PC-9 (cell line): ENCODE measurements at regions of chr17 and their contacts with region 1.

Region 1: GRCh38 chr17:9090641-9091096 is 69.4 kb downstream of the NTN1 start:
- DNase-seq: no peak
- H3K4me3 ChIP-seq: no peak overlapping the region
- H3K27ac ChIP-seq: no peak overlapping the region
- H3K4me1 ChIP-seq: no peaks in the 10 kb centered on the region
- H3K27me3 ChIP-seq: no peaks in the 10 kb centered on the region
- CTCF ChIP-seq: no peak

Region 2: DNA sequence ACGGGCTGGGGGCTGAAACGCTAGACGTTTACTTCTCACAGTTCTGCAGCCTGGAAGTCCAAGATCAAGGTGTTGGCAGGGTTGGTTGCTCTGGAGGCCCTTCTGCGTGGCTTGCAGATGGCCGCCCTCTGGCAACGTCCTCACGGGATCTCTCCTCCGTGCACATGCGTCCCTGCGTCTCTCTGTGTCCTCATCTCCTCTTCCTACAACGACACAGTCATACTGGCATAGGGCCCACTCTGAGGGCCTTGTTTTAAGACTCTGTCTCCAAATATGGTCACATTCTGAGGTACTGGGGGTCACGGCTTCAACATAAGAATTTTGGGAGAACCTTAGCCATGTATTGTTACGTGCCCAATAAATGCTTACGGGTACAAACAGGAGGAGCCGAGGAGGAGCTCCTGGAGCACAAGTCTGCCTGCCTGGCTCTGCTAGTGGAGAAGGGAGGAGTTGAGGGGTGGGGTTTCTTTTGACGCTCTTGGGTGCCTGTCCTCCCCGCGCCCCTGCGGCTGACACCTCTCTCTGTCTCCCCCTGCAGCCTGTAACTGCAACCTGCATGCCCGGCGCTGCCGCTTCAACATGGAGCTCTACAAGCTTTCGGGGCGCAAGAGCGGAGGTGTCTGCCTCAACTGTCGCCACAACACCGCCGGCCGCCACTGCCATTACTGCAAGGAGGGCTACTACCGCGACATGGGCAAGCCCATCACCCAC is 71.8 kb after region 1 on chr17:
- CTCF ChIA-PET with region 1: no interaction called
- POLR2A ChIA-PET with region 1: no interaction called
- intact Hi-C with region 1: no loop called
- DNase-seq: no peak
- H3K4me3 ChIP-seq: no peak overlapping the region
- H3K27ac ChIP-seq: no peak overlapping the region
- H3K4me1 ChIP-seq: no peaks in the 10 kb centered on the region
- H3K27me3 ChIP-seq: no peaks in the 10 kb centered on the region
- CTCF ChIP-seq: no peak

Region 3: GRCh38 chr17:9291912-9292560 is 201.4 kb after region 1 on chr17:
- CTCF ChIA-PET with region 1: no interaction called
- POLR2A ChIA-PET with region 1: no interaction called
- intact Hi-C with region 1: no loop called
- DNase-seq: peak in 1 of 2 experiments; percentile 29
- H3K4me3 ChIP-seq: no peak overlapping the region
- H3K27ac ChIP-seq: no peak overlapping the region
- H3K4me1 ChIP-seq: no peaks in the 10 kb centered on the region
- H3K27me3 ChIP-seq: no peaks in the 10 kb centered on the region
- CTCF ChIP-seq: peak; percentile 60

Region 4: DNA sequence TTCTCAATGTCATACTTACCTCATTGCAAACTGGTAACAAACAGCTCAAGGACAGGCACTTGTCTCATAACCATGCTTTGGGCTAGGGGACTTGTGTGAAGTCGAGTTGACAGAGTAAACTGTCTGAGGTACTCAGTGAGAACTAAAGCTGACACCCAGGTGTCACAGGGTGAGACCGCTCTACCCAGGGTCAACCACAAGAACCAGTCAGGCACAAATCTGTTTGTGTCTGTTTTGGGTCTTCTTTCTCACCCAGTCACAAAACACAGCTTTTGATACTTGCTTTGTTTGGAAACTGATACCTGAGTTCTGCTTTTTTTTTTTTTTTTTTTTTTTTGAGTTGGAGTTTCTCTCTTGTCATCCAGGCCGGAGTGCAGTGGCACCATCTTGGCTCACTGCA is 323.8 kb after region 1 on chr17:
- CTCF ChIA-PET with region 1: no interaction called
- POLR2A ChIA-PET with region 1: interaction called, 11 read pairs
- intact Hi-C with region 1: no loop called
- DNase-seq: no peak
- H3K4me3 ChIP-seq: no peak overlapping the region
- H3K27ac ChIP-seq: no peak overlapping the region
- H3K4me1 ChIP-seq: no peaks in the 10 kb centered on the region
- H3K27me3 ChIP-seq: no peaks in the 10 kb centered on the region
- CTCF ChIP-seq: no peak